CD4-positive, alpha-beta memory T cell (primary cell): ENCODE measurements at regions of chr4 and their contacts with region 1.

Region 1: GRCh38 chr4:83284193-83285054 is at the start of gene COQ2:
- DNase-seq: peak; percentile 90 to 93 (median 91)
- H3K4me3 ChIP-seq: peak within 1 kb of the TSS; percentile 84 to 90
- H3K4me3 Mint-ChIP-seq: peak within 1 kb of the TSS; percentile 94 to 99 (median 98)
- H3K27ac ChIP-seq: peak within 1 kb of the TSS; percentile 60
- H3K27ac Mint-ChIP-seq: peak within 1 kb of the TSS; percentile 93 to 99 (median 99)
- H3K4me1 ChIP-seq: peaks cover 24% of the 10 kb centered on the region
- H3K4me1 Mint-ChIP-seq: peaks cover 26 to 46% (median 32%) of the 10 kb centered on the region in 4 donors
- H3K27me3 ChIP-seq: no peaks in the 10 kb centered on the region
- H3K27me3 Mint-ChIP-seq: no peaks in the 10 kb centered on the region
- total RNA-seq, gene COQ2: 6.5 to 7.2 TPM

Region 2: GRCh38 chr4:82462415-82462831 is 822.0 kb before region 1 on chr4:
- CTCF ChIA-PET with region 1: interaction called, 5 read pairs
- POLR2A ChIA-PET with region 1: no interaction called
- intact Hi-C with region 1: loop called (anchors 1 kb)
- DNase-seq: peak; percentile 74 to 83 (median 77)
- H3K4me3 ChIP-seq: no peak overlapping the region
- H3K4me3 Mint-ChIP-seq: no peak overlapping the region
- H3K27ac ChIP-seq: no peak overlapping the region
- H3K27ac Mint-ChIP-seq: peak overlapping the region in 5 of 7 donors; percentile 29 to 55 (median 45)
- H3K4me1 ChIP-seq: no peaks in the 10 kb centered on the region
- H3K4me1 Mint-ChIP-seq: peaks cover 0 to 5% (median 2%) of the 10 kb centered on the region in 4 donors
- H3K27me3 ChIP-seq: no peaks in the 10 kb centered on the region
- H3K27me3 Mint-ChIP-seq: no peaks in the 10 kb centered on the region

Region 3: DNA sequence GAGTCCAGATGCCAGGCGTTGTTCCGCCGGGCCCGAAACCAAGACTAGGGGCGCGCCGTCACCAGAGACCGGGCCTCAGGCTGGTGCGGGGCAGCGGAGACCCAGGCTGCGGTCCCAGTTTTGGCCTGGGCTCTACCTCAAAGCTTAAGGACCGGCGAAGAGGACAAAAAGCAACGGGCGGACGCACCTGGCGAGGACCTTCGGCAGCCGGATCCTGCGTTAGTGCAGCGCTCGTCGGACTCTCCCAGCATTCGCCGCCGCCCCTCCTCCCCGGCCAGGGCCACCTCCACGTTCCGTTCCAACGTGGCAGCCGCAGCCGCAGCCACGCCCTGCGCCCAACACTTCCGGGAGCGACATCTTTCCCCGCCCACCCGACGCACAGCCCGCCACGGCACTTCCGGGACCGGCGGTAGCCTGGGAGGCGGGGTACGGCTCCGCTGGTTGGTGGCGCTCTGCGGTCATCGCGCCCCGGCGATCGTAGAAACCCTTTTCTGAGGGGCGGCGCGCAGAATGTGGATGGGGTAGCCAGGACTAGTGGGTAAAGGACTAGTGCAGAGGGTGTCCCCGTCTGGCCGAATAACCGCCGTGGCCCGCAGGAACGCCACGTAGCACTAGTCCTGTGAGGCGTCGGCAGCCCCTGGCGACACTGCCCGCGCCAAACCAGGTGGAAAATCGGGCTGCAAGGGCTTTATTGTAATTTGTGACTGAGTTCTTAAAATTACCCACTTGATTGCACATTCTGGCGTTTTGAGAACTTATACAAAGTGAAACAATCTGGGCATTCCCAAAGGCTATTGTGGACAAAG is 393.3 kb before region 1 on chr4 and contains the start of gene SEC31A:
- CTCF ChIA-PET with region 1: interaction called, 3 read pairs
- POLR2A ChIA-PET with region 1: no interaction called
- intact Hi-C with region 1: loop called (anchors 1 kb)
- DNase-seq: peak; percentile 95 to 96 (median 96)
- H3K4me3 ChIP-seq: peak within 1 kb of the TSS; percentile 66 to 91
- H3K4me3 Mint-ChIP-seq: peak within 1 kb of the TSS; percentile 89 to 96 (median 94)
- H3K27ac ChIP-seq: peak within 1 kb of the TSS; percentile 99
- H3K27ac Mint-ChIP-seq: peak within 1 kb of the TSS; percentile 95 to 99 (median 98)
- H3K4me1 ChIP-seq: peaks cover 32% of the 10 kb centered on the region
- H3K4me1 Mint-ChIP-seq: peaks cover 22 to 51% (median 32%) of the 10 kb centered on the region in 4 donors
- H3K27me3 ChIP-seq: no peaks in the 10 kb centered on the region
- H3K27me3 Mint-ChIP-seq: no peaks in the 10 kb centered on the region
- total RNA-seq, gene SEC31A: 157 to 167 TPM

Region 4: DNA sequence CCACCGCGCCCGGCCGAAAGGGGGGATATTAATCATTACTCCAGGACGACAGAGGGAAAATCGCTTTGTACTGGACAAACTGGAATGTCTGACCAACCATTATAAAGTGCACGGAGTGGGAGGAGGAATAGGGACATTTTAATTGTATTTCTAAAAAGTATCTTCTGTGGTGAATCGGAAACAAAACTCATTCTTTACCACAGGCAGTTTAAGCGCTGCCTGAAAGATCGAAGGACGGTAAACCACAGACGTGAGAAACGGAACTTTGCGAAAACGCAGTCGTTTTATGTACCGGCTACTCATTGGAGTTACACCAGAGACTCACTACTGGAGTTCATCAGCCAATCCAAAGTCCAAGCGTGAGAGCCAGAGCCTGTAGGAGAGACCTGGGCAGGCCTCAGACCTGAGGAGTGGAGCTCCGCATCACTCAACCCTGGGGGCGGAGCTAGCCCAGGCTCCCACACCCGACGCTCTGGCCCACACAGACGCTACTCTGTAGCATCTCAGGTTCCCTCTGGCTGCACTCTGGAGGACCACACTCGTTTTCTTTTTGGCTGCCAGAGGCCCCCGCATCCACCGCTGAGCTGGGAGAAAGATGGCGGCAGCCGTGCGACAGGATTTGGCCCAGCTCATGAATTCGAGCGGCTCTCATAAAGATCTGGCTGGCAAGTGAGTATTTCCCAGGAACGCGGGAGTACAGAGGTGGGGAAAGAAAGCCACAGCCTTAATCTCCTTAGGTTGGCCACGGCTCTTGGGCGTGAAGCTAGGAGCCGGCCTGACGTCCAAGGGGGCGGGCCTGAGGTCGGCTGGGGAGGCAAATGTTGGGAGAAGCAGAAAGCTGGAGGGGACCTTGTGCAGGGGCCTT is 249.6 kb before region 1 on chr4 and contains the start of gene COPS4:
- CTCF ChIA-PET with region 1: interaction called, 8 read pairs
- POLR2A ChIA-PET with region 1: interaction called, 20 read pairs
- intact Hi-C with region 1: loop called (anchors 1 kb)
- DNase-seq: peak; percentile 93 to 99 (median 98)
- H3K4me3 ChIP-seq: peak within 1 kb of the TSS; percentile 76 to 84
- H3K4me3 Mint-ChIP-seq: peak within 1 kb of the TSS; percentile 98 to 100 (median 100)
- H3K27ac ChIP-seq: peak within 1 kb of the TSS; percentile 85
- H3K27ac Mint-ChIP-seq: peak within 1 kb of the TSS; percentile 94 to 100 (median 99)
- H3K4me1 ChIP-seq: peaks cover 25% of the 10 kb centered on the region
- H3K4me1 Mint-ChIP-seq: peaks cover 15 to 41% (median 25%) of the 10 kb centered on the region in 4 donors
- H3K27me3 ChIP-seq: no peaks in the 10 kb centered on the region
- H3K27me3 Mint-ChIP-seq: no peaks in the 10 kb centered on the region
- total RNA-seq, gene COPS4: 24.6 to 26.1 TPM

Region 5: GRCh38 chr4:83074086-83074704 is 210.2 kb before region 1 on chr4:
- CTCF ChIA-PET with region 1: interaction called, 96 read pairs
- POLR2A ChIA-PET with region 1: interaction called, 7 read pairs
- intact Hi-C with region 1: loop called (anchors 1 kb)
- DNase-seq: peak; percentile 84 to 89 (median 85)
- H3K4me3 ChIP-seq: no peak overlapping the region
- H3K4me3 Mint-ChIP-seq: peak overlapping the region; percentile 59 to 83 (median 74)
- H3K27ac ChIP-seq: no peak overlapping the region
- H3K27ac Mint-ChIP-seq: peak overlapping the region; percentile 43 to 85 (median 63)
- H3K4me1 ChIP-seq: no peaks in the 10 kb centered on the region
- H3K4me1 Mint-ChIP-seq: peaks cover 4 to 14% (median 5%) of the 10 kb centered on the region in 4 donors
- H3K27me3 ChIP-seq: no peaks in the 10 kb centered on the region
- H3K27me3 Mint-ChIP-seq: no peaks in the 10 kb centered on the region

Region 6: GRCh38 chr4:83259586-83259985 is 24.8 kb before region 1 on chr4:
- CTCF ChIA-PET with region 1: interaction called, 47 read pairs
- POLR2A ChIA-PET with region 1: interaction called, 3 read pairs
- intact Hi-C with region 1: loop called (anchors 2 kb)
- DNase-seq: no peak
- H3K4me3 ChIP-seq: no peak overlapping the region
- H3K4me3 Mint-ChIP-seq: no peak overlapping the region
- H3K27ac ChIP-seq: no peak overlapping the region
- H3K27ac Mint-ChIP-seq: no peak overlapping the region
- H3K4me1 ChIP-seq: peaks cover 6% of the 10 kb centered on the region
- H3K4me1 Mint-ChIP-seq: peaks cover 0 to 5% (median 3%) of the 10 kb centered on the region in 4 donors
- H3K27me3 ChIP-seq: no peaks in the 10 kb centered on the region
- H3K27me3 Mint-ChIP-seq: no peaks in the 10 kb centered on the region

Region 7: DNA sequence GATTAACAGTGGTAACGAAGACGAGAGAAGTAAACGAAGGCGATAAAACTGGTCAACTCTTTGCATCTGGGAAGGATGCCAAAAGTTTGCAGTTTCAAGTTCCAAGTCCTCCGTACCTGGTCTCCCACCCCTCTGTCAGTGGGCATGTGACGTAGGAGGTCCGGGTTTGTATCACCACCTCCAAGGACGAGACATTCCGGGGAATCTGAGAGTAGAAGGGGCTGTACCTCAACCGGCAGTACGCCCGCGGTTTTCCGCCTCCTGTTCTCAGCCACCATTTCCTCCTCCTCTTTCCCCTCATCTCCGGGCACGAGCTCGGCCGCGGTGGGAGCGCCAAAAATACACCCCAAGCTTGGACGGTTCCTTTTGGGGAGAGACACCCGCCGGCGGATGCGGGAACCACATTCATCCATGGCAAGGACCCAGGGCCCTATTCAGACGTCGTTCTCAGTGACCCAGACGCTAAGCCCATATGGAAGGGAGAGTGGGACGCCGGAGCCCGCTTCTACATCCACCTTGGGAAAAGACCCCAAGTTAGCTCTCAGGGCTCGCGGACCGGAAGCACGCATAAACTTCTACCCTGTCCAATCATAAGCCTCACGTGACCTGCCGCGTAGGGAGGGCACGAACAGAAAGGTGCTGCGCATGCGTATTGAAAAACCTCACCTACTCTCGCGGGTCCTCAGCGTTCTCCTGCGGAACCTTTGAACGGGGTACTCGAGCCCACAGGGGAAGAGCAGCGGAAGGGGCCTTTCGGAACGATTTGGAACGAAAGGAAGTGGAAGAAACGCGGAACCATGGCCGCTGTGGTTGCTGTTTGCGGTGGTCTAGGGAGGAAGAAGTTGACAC is 171.1 kb after region 1 on chr4 and contains the starts of genes HELQ and MRPS18C:
- CTCF ChIA-PET with region 1: interaction called, 3 read pairs
- POLR2A ChIA-PET with region 1: interaction called, 16 read pairs
- intact Hi-C with region 1: loop called (anchors 1 kb)
- DNase-seq: peak; percentile 94 to 98 (median 98)
- H3K4me3 ChIP-seq: peak within 1 kb of the TSS; percentile 90 to 96
- H3K4me3 Mint-ChIP-seq: peak within 1 kb of the TSS; percentile 99 to 100 (median 100)
- H3K27ac ChIP-seq: peak within 1 kb of the TSS; percentile 100
- H3K27ac Mint-ChIP-seq: peak within 1 kb of the TSS; percentile 100
- H3K4me1 ChIP-seq: peaks cover 37% of the 10 kb centered on the region
- H3K4me1 Mint-ChIP-seq: peaks cover 29 to 64% (median 42%) of the 10 kb centered on the region in 4 donors
- H3K27me3 ChIP-seq: no peaks in the 10 kb centered on the region
- H3K27me3 Mint-ChIP-seq: no peaks in the 10 kb centered on the region
- total RNA-seq, gene HELQ: 48.1 to 49.0 TPM
- total RNA-seq, gene MRPS18C: 45.7 to 51.4 TPM